Natural killer cell (primary cell): ENCODE measurements at regions of chr12 and their contacts with region 1.

Region 1: DNA sequence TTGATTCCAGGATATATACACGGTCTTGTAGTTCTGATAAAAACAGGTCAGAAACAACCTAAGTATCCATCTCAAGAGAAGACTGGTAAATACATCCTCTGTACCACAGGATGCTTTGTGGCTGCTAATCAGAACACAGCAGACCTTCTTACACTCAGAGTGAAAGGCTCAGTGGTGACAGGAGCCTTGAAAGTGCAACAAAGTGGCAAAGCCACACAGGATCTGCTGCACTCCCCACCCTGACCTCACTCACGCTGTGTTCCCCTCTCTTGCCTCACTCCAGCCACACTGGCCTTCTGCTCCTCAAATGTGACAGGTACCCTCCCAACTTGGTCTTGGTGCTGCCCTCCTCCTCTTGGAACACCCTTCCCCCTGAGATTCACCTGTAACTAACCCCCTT is 98.1 kb upstream of the GRIP1 start:
- DNase-seq: peak; percentile 51 to 69
- ATAC-seq: peak; percentile 93 to 99 (median 96)
- H3K4me3 ChIP-seq: no peak overlapping the region
- H3K4me3 Mint-ChIP-seq: peak overlapping the region; percentile 84
- H3K27ac ChIP-seq: peak overlapping the region; percentile 56
- H3K27ac Mint-ChIP-seq: peak overlapping the region; percentile 72 to 91
- H3K4me1 ChIP-seq: peaks cover 9% of the 10 kb centered on the region
- H3K4me1 Mint-ChIP-seq: peaks cover 53 to 59% of the 10 kb centered on the region in 2 donors
- H3K27me3 ChIP-seq: no peaks in the 10 kb centered on the region
- H3K27me3 Mint-ChIP-seq: peaks cover 23 to 26% of the 10 kb centered on the region in 2 donors
- CTCF ChIP-seq: no peak

Region 2: GRCh38 chr12:66739933-66740648 is 36.9 kb before region 1 on chr12:
- intact Hi-C with region 1: loop called (anchors 5 kb)
- DNase-seq: no peak
- ATAC-seq: no peak
- H3K4me3 ChIP-seq: no peak overlapping the region
- H3K4me3 Mint-ChIP-seq: no peak overlapping the region
- H3K27ac ChIP-seq: no peak overlapping the region
- H3K27ac Mint-ChIP-seq: no peak overlapping the region
- H3K4me1 ChIP-seq: peaks cover 2% of the 10 kb centered on the region
- H3K4me1 Mint-ChIP-seq: peaks cover 19 to 21% of the 10 kb centered on the region in 2 donors
- H3K27me3 ChIP-seq: no peaks in the 10 kb centered on the region
- H3K27me3 Mint-ChIP-seq: peaks cover 4% of the 10 kb centered on the region in 2 donors
- CTCF ChIP-seq: no peak